Caco-2 (cell line): ENCODE measurements at regions of chr2 and their contacts with region 1.

Region 1: DNA sequence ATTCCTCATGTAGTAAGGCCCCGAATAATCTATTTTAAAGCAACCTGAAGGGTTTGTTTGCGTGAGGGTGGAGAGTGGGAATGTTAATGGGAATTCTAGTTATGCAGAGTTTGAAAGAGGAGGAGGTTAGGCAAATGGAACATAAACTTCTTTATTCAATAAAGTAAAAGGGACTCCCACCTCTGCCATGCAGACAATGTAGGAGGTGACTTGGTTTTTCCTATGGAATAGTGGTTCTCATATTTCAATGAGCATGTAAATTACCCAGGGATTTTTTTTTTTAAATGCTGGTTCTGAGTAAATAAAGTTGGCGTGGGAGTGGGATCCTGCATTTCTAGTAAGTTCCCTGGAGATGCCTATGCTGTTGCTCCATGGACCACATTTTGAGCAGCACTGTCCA is 367.9 kb downstream of the THSD7B start:
- DNase-seq: no peak
- H3K4me3 ChIP-seq: no peak overlapping the region
- H3K4me3 Mint-ChIP-seq: peak overlapping the region; percentile 3
- H3K27ac Mint-ChIP-seq: no peak overlapping the region
- H3K4me1 ChIP-seq: peaks cover 11% of the 10 kb centered on the region
- H3K4me1 Mint-ChIP-seq: no peaks in the 10 kb centered on the region
- H3K27me3 ChIP-seq: no peaks in the 10 kb centered on the region
- H3K27me3 Mint-ChIP-seq: no peaks in the 10 kb centered on the region
- CTCF ChIP-seq: no peak

Region 2: GRCh38 chr2:137047369-137047768 is 85.9 kb before region 1 on chr2:
- CTCF ChIA-PET with region 1: no interaction called
- POLR2A ChIA-PET with region 1: no interaction called
- intact Hi-C with region 1: no loop called
- DNase-seq: no peak
- H3K4me3 ChIP-seq: no peak overlapping the region
- H3K4me3 Mint-ChIP-seq: no peak overlapping the region
- H3K27ac Mint-ChIP-seq: no peak overlapping the region
- H3K4me1 ChIP-seq: peaks cover 14% of the 10 kb centered on the region
- H3K4me1 Mint-ChIP-seq: peaks cover 12% of the 10 kb centered on the region
- H3K27me3 ChIP-seq: no peaks in the 10 kb centered on the region
- H3K27me3 Mint-ChIP-seq: no peaks in the 10 kb centered on the region
- CTCF ChIP-seq: no peak

Region 3: DNA sequence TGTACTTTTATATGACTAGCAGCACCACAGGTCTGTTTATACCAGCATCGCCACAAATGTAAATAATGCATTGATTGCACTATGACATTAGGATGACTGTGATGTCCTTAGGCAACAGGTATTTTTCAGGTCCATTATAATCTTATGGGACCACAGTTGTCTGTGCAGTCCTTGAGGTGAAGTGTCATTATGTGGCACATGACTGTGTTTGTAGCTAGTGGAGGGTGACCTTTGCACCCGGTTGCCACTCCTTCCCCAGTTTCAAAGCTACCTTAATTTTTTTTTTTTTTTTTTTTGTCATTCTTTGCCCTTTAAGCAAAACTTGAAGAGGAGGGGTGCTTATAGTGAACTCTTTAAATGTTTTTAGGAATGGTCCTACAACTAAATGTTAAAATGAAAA is 18.5 kb after region 1 on chr2:
- CTCF ChIA-PET with region 1: no interaction called
- POLR2A ChIA-PET with region 1: no interaction called
- intact Hi-C with region 1: loop called (anchors 2 kb)
- DNase-seq: peak; percentile 32 to 46
- H3K4me3 ChIP-seq: no peak overlapping the region
- H3K4me3 Mint-ChIP-seq: no peak overlapping the region
- H3K27ac Mint-ChIP-seq: no peak overlapping the region
- H3K4me1 ChIP-seq: peaks cover 11% of the 10 kb centered on the region; the same call in 1 of the 2 replicates
- H3K4me1 Mint-ChIP-seq: peaks cover 7% of the 10 kb centered on the region
- H3K27me3 ChIP-seq: no peaks in the 10 kb centered on the region; the same call in 1 of the 2 replicates
- H3K27me3 Mint-ChIP-seq: no peaks in the 10 kb centered on the region
- CTCF ChIP-seq: no peak

Region 4: GRCh38 chr2:137173463-137173862 is 40.2 kb after region 1 on chr2:
- CTCF ChIA-PET with region 1: no interaction called
- POLR2A ChIA-PET with region 1: no interaction called
- intact Hi-C with region 1: loop called (anchors 2 kb)
- DNase-seq: peak; percentile 42 to 54
- H3K4me3 ChIP-seq: no peak overlapping the region
- H3K4me3 Mint-ChIP-seq: no peak overlapping the region
- H3K27ac Mint-ChIP-seq: peak overlapping the region; percentile 42
- H3K4me1 ChIP-seq: peaks cover 19% of the 10 kb centered on the region
- H3K4me1 Mint-ChIP-seq: peaks cover 19% of the 10 kb centered on the region
- H3K27me3 ChIP-seq: no peaks in the 10 kb centered on the region
- H3K27me3 Mint-ChIP-seq: no peaks in the 10 kb centered on the region
- CTCF ChIP-seq: peak; percentile 47 to 49